CD4-positive, alpha-beta memory T cell (primary cell): ENCODE measurements at regions of chr2 and their contacts with region 1.

Region 1: DNA sequence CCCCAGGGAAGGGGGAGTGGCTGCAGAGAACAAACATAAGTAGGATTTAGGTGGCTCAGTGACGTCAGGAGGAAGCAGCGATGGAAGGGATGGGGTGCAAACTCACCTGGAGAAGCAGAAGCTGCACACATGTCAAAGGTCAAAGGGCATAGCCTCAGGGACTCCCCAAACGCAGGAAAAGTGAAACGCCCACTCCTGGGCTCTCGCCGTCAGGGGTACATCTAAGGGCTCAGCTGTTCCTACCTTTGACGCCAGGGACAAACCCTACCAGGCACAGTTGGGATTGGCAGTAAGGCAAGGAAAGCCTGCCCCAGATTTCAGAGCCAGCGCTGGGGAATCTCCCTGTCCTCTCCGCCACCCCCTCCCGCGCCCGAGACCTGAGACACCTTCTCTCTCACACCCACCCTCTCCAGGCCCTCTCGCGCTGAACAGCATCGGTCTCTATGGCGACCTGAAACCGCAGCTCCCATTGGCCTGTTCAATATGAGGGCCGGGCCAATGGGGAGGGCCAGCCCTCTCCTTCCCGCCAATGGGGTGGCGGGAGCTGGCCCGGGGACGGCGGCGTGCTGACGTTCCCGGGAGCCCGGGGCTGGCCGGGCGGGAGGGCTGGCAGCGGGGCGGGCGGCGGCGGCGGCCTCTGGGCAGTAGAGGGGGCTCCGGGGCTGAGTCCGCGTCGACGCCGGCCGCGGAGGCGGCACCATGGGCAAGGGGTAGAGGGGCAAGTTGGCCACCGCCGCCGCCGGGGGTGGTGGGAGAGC is at the starts of genes CCDC148 and PKP4:
- DNase-seq: peak; percentile 88 to 97 (median 90)
- H3K4me3 ChIP-seq: peak within 1 kb of the TSS; percentile 57 to 84
- H3K4me3 Mint-ChIP-seq: peak within 1 kb of the TSS; percentile 91 to 98 (median 94)
- H3K27ac ChIP-seq: peak within 1 kb of the TSS; percentile 67
- H3K27ac Mint-ChIP-seq: peak within 1 kb of the TSS; percentile 91 to 97 (median 93)
- H3K4me1 ChIP-seq: peaks cover 23% of the 10 kb centered on the region
- H3K4me1 Mint-ChIP-seq: peaks cover 17 to 38% (median 26%) of the 10 kb centered on the region in 4 donors
- H3K27me3 ChIP-seq: no peaks in the 10 kb centered on the region
- H3K27me3 Mint-ChIP-seq: peaks cover 0 to 3% of the 10 kb centered on the region in 2 donors
- total RNA-seq, gene CCDC148: not detected
- total RNA-seq, gene PKP4: 35.0 to 39.3 TPM

Region 2: GRCh38 chr2:157628477-157629415 is 827.7 kb before region 1 on chr2 and contains the start of gene ACVR1C:
- CTCF ChIA-PET with region 1: no interaction called
- POLR2A ChIA-PET with region 1: no interaction called
- intact Hi-C with region 1: loop called (anchors 2 kb)
- DNase-seq: peak; percentile 70 to 81 (median 75)
- H3K4me3 ChIP-seq: peak within 1 kb of the TSS; percentile 45 to 68
- H3K4me3 Mint-ChIP-seq: peak within 1 kb of the TSS; percentile 92 to 98 (median 95)
- H3K27ac ChIP-seq: peak within 1 kb of the TSS; percentile 58
- H3K27ac Mint-ChIP-seq: peak within 1 kb of the TSS; percentile 85 to 94 (median 89)
- H3K4me1 ChIP-seq: peaks cover 39% of the 10 kb centered on the region
- H3K4me1 Mint-ChIP-seq: peaks cover 22 to 48% (median 33%) of the 10 kb centered on the region in 4 donors
- H3K27me3 ChIP-seq: no peaks in the 10 kb centered on the region
- H3K27me3 Mint-ChIP-seq: peaks cover 0 to 2% of the 10 kb centered on the region in 2 donors
- total RNA-seq, gene ACVR1C: 6.3 to 6.9 TPM

Region 3: DNA sequence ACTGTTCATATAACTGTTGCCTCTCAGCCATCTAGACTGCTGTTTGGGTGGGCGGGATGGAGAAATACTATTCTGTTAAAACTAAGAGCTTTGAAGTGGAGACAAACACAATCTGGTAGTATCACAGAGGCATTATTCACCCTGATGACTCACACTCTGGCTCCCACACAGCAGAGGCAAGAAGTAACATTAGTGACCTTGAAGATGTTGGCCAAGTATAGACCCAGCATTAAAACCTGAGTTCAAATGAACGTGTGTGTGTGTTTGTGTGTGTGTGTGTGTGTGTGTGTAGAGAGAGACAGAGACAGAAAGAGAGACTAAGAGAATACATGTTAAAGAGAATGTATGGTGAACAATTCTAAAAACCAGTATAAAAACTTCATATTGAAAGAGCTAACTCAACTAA is 557.9 kb before region 1 on chr2:
- CTCF ChIA-PET with region 1: interaction called, 4 read pairs
- POLR2A ChIA-PET with region 1: no interaction called
- intact Hi-C with region 1: loop called (anchors 5 kb)
- DNase-seq: peak in 4 of 5 donors; percentile 15 to 83 (median 32)
- H3K4me3 ChIP-seq: peak overlapping the region in 1 of 2 donors; percentile 11
- H3K4me3 Mint-ChIP-seq: peak overlapping the region; percentile 40 to 95 (median 90)
- H3K27ac ChIP-seq: peak overlapping the region; percentile 51
- H3K27ac Mint-ChIP-seq: peak overlapping the region; percentile 96 to 100 (median 99)
- H3K4me1 ChIP-seq: peaks cover 77% of the 10 kb centered on the region
- H3K4me1 Mint-ChIP-seq: peaks cover 62 to 79% (median 72%) of the 10 kb centered on the region in 4 donors
- H3K27me3 ChIP-seq: no peaks in the 10 kb centered on the region
- H3K27me3 Mint-ChIP-seq: no peaks in the 10 kb centered on the region

Region 4: DNA sequence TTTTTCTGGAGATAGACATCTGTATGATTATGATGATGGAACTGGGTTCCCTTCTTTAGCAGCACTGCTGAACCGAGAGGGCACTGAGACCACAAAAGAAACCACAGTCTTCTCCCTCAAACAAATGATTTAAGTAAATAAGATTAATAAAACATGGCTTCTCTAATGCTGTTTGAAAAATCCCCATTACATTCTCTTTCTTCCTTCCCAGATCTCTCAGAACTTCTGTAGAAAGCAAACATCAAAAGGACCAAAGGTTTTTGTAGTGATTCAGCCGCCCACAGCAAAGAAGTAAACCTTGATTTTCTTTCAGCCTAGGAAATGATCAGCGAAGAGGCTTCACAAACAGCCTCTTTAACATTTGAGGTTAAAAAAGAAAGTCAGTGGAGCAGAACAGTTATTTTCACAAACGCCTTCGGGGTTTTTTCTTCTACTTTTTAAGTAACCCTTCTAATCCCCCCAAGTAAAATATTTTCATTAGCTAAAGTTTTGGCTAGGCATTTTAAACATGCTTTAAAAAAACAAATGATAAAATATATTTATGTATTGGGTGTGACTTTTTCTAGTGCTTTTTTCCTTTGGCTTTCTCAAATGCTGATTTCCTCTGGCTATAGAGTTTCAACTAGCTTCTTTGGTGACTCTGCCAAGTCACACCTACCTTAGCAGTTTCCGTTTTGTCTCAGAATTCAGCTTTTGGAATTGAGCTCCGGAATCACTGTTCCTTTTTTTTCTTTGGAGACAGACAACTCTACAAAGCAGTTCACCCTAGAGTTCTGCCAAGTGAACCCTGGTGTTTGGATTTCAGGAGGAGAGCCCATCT is 265.2 kb before region 1 on chr2:
- CTCF ChIA-PET with region 1: no interaction called
- POLR2A ChIA-PET with region 1: no interaction called
- intact Hi-C with region 1: loop called (anchors 5 kb)
- DNase-seq: peak; percentile 37 to 61 (median 51)
- H3K4me3 ChIP-seq: no peak overlapping the region
- H3K4me3 Mint-ChIP-seq: peak overlapping the region; percentile 11 to 83 (median 39)
- H3K27ac ChIP-seq: no peak overlapping the region
- H3K27ac Mint-ChIP-seq: peak overlapping the region; percentile 15 to 66 (median 44)
- H3K4me1 ChIP-seq: peaks cover 27% of the 10 kb centered on the region
- H3K4me1 Mint-ChIP-seq: peaks cover 11 to 32% (median 16%) of the 10 kb centered on the region in 4 donors
- H3K27me3 ChIP-seq: no peaks in the 10 kb centered on the region
- H3K27me3 Mint-ChIP-seq: peaks cover 0 to 7% of the 10 kb centered on the region in 2 donors

Region 5: DNA sequence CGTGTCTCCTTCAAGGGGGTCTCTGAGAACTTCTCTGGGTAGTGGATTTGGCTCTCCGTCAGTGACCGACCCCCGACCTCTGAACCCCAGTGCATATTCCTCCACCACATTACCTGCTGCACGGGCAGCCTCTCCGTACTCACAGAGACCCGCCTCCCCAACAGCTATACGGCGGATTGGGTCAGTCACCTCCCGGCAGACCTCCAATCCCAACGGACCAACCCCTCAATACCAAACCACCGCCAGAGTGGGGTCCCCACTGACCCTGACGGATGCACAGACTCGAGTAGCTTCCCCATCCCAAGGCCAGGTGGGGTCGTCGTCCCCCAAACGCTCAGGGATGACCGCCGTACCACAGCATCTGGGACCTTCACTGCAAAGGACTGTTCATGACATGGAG is 168.5 kb after region 1 on chr2:
- CTCF ChIA-PET with region 1: no interaction called
- POLR2A ChIA-PET with region 1: no interaction called
- intact Hi-C with region 1: loop called (anchors 5 kb)
- DNase-seq: peak in 1 of 5 donors; percentile 29
- H3K4me3 ChIP-seq: no peak overlapping the region
- H3K4me3 Mint-ChIP-seq: no peak overlapping the region
- H3K27ac ChIP-seq: no peak overlapping the region
- H3K27ac Mint-ChIP-seq: peak overlapping the region in 1 of 7 donors; percentile 13
- H3K4me1 ChIP-seq: no peaks in the 10 kb centered on the region
- H3K4me1 Mint-ChIP-seq: no peaks in the 10 kb centered on the region
- H3K27me3 ChIP-seq: no peaks in the 10 kb centered on the region
- H3K27me3 Mint-ChIP-seq: no peaks in the 10 kb centered on the region

Region 6: DNA sequence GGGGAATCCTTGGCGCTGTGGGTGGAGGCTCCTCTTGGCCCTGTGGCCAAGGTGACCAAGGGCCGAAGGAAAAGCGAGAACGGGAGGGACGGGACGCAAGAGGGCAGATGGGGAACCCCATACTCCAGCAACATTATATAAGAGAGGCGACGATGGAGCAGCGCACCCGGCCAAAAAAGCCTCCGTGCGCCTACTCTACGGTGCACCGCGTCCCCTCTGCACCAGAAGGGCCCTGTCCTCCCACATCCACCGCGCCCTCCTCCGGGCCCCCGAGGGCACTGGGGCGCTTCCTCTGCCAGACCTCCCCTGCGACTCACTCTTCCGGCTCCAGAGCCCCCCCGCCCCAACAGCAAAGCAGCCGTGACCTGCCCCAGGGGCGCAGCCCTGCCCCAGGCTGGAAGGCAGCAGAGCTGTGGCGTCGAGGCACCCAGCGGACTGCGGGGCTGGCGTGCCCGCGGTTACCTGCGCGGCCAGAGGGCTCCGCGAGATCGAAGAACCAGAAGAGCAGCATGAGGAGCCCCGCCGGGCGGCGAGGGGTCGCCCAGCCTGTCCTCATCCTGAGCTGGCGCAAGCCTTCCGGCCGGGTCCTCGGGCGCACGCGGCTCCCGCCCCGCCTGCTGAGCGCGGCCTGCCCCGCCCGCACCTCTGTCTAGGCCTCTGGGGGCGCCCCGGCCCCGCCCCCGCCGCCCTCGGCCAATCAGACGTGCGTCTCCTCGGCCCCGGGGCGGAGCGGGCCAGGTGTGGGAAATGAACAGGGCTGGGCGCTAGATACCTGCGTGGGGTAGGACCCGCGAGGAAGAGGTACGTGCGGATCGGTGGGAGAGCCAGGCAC is 1447.9 kb after region 1 on chr2:
- CTCF ChIA-PET with region 1: no interaction called
- POLR2A ChIA-PET with region 1: no interaction called
- intact Hi-C with region 1: loop called (anchors 2 kb)
- DNase-seq: peak; percentile 79 to 85 (median 82)
- H3K4me3 ChIP-seq: peak within 1 kb of the TSS; percentile 92 to 97
- H3K4me3 Mint-ChIP-seq: peak within 1 kb of the TSS; percentile 98 to 100 (median 99)
- H3K27ac ChIP-seq: peak within 1 kb of the TSS; percentile 82
- H3K27ac Mint-ChIP-seq: peak within 1 kb of the TSS; percentile 97 to 100 (median 98)
- H3K4me1 ChIP-seq: peaks cover 21% of the 10 kb centered on the region
- H3K4me1 Mint-ChIP-seq: peaks cover 18 to 43% (median 30%) of the 10 kb centered on the region in 4 donors
- H3K27me3 ChIP-seq: no peaks in the 10 kb centered on the region
- H3K27me3 Mint-ChIP-seq: no peaks in the 10 kb centered on the region